H1 (cell line): ENCODE measurements at regions of chr16 and their contacts with region 1.

Region 1: GRCh38 chr16:78705694-78706093 is 606.2 kb downstream of the WWOX start:
- DNase-seq: no peak
- H3K4me3 ChIP-seq: no peak overlapping the region
- H3K27ac ChIP-seq: no peak overlapping the region
- H3K4me1 ChIP-seq: peaks cover 0 to 3% (median 0%) of the 10 kb centered on the region in 4 experiments; a peak in 1 of 7 replicates
- H3K27me3 ChIP-seq: no peaks in the 10 kb centered on the region
- CTCF ChIP-seq: peak in 2 of 3 experiments; percentile 33 to 64; a peak in 2 of 4 replicates
- EP300 ChIP-seq: no peak
- POLR2A ChIP-seq: no peak
- RAD21 ChIP-seq: peak; percentile 76 to 80

Region 2: DNA sequence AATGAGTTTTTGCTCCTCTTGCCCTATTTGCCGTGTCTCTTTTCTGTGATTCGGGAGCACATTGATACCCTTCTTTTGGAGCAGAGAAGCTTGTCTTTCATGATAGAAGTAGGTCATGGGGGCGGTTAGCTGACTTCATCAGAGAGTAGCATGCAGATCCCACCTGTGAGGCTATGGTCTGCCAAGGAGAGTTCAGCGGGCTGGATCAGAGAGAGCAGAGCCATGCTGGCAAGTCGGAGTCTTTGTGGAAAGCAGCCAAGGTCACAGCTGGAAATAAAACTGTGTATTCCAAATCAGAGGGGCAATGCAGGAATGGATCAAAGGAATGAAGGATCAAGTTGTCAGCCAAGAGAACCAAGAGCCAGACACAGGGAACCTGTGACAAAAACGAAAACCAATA is 10.3 kb before region 1 on chr16:
- CTCF ChIA-PET with region 1: interaction called, 20 read pairs
- POLR2A ChIA-PET with region 1: no interaction called
- DNase-seq: no peak
- H3K4me3 ChIP-seq: no peak overlapping the region
- H3K27ac ChIP-seq: no peak overlapping the region
- H3K4me1 ChIP-seq: no peaks in the 10 kb centered on the region
- H3K27me3 ChIP-seq: no peaks in the 10 kb centered on the region
- CTCF ChIP-seq: no peak
- EP300 ChIP-seq: no peak
- POLR2A ChIP-seq: no peak
- RAD21 ChIP-seq: no peak

Region 3: DNA sequence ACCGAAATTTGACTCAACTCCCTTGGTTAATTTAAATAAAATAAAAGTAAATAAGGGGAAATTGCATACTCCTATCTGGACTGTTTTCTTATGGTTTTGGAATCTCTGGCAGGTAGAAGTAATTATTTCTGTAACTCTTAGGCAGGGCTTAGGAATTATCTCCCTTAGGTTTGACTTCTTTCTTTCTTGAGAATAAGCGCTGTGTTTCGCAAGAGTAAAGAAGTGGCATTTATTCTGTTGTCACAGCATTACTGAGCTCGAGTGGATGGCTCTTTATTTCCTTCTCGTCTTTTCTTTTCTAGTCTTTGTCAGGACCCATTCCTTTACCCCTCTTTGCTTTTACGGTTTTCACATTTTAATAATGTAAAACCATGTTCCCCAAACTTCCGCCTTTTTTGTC is 27.0 kb after region 1 on chr16:
- CTCF ChIA-PET with region 1: interaction called, 10 read pairs
- POLR2A ChIA-PET with region 1: no interaction called
- DNase-seq: no peak
- H3K4me3 ChIP-seq: no peak overlapping the region
- H3K27ac ChIP-seq: no peak overlapping the region
- H3K4me1 ChIP-seq: no peaks in the 10 kb centered on the region
- H3K27me3 ChIP-seq: no peaks in the 10 kb centered on the region
- CTCF ChIP-seq: no peak
- EP300 ChIP-seq: no peak
- POLR2A ChIP-seq: no peak
- RAD21 ChIP-seq: no peak

Region 4: DNA sequence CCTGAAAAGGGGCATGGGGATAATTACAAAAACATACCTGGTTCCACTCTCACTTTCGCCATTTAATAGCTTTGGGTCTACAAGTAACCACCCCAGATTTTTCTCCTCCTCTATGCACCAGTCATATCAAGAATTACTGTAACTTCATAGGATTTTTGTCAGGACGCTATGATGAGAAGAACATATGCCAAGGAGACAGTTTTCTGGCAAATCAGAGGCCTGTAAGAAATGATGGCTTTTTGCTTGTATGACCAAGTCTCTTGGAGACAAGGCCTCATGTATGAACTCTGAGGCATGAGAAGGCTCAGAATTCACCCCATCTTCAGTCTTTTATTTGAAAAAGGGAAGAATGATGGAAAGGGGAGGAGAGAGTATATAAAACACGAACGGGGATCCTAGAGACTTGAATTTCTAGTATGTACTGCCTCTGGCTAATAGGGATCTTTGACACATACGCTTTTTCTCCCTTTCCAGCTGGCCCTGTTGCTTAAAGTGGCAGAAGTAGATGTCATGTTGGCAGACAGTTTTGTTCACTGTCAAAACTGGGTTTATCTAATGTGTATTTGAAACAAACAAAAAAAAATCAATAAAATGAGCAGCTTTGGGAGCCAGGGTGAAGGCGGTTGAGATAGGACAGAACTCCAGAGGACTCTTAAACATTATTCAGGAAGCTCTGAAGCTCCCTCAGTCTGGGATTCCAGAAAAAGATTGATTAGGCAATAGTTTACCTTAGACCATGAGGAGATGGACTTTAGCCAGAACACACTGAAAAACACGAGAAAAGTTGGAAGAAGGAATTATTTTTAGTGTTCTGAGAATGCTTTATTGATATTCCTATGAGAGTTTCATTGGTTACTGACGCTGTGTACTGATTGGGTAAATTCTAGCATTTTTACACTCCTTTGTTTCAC is 50.3 kb after region 1 on chr16:
- CTCF ChIA-PET with region 1: no interaction called
- POLR2A ChIA-PET with region 1: no interaction called
- DNase-seq: no peak
- H3K4me3 ChIP-seq: no peak overlapping the region
- H3K27ac ChIP-seq: no peak overlapping the region
- H3K4me1 ChIP-seq: peaks cover 0 to 6% (median 1%) of the 10 kb centered on the region in 4 experiments; a peak in 3 of 7 replicates
- H3K27me3 ChIP-seq: no peaks in the 10 kb centered on the region
- CTCF ChIP-seq: no peak
- EP300 ChIP-seq: no peak
- POLR2A ChIP-seq: no peak
- RAD21 ChIP-seq: no peak

Region 5: GRCh38 chr16:78844682-78845081 is 139.0 kb after region 1 on chr16:
- CTCF ChIA-PET with region 1: no interaction called
- POLR2A ChIA-PET with region 1: no interaction called
- DNase-seq: no peak
- H3K4me3 ChIP-seq: no peak overlapping the region
- H3K27ac ChIP-seq: no peak overlapping the region
- H3K4me1 ChIP-seq: no peaks in the 10 kb centered on the region
- H3K27me3 ChIP-seq: no peaks in the 10 kb centered on the region
- CTCF ChIP-seq: no peak
- EP300 ChIP-seq: no peak
- POLR2A ChIP-seq: no peak
- RAD21 ChIP-seq: no peak